Activated CD8-positive, alpha-beta memory T cell treated with anti-CD3 and anti-CD28 coated beads, Interleukin-2, amount 10 ng/mL, durations not matched to agents 7 days and 5 days (primary cell): ENCODE measurements at regions of chr12 and their contacts with region 1.

Region 1: DNA sequence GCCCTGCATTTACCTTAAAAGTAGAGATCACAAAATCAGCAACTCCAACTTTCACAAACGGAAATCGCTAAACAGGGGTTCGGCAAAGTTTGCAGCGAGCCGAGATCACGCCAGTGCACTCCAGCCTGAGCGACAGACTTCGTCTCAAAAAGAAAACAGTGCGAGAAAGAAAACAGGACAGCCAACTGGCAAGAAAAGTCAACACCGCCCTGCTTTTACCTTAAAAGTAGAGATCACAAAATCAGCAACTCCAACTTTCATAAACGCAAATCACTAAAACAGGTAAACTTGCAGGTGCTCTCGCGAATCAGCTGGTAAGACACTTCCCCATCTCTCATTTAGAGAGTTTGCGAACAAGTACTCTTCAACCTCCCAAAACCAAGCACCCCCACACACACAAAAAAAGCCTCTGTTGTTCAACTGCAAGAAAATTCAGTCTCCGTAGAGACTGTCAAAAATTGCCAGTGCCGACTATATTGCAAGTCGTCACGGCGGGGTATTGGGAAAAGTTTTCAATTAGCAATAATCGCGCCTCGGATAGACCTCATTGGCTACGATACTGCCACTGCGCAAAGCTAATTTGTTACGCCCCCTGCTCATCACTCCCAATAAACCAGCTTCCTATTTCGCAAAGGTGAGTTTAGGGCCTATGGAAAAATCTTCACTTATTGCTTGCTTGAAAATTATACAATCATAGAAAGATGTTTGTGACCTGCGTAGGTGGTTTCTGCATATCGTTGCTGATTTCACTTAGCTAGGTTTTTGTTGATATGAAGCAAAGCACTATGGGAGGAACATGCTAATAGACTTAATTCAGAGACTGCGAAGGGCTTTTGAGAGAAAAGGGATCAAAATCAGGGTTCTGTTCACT is at the start of gene RNU4-1:
- DNase-seq: peak; percentile 90
- ATAC-seq: peak; percentile 45
- H3K4me3 Mint-ChIP-seq: no peak within 1 kb of the TSS
- H3K27ac Mint-ChIP-seq: no peak within 1 kb of the TSS
- H3K4me1 Mint-ChIP-seq: peaks cover 10% of the 10 kb centered on the region
- H3K27me3 Mint-ChIP-seq: peaks cover 2% of the 10 kb centered on the region
- total RNA-seq, gene RNU4-1: 780 to 2,122 TPM

Region 2: GRCh38 chr12:120200364-120200800 is 92.5 kb before region 1 on chr12:
- CTCF ChIA-PET with region 1: interaction called, 28 read pairs
- DNase-seq: no peak
- ATAC-seq: no peak
- H3K4me3 Mint-ChIP-seq: peak overlapping the region; percentile 89
- H3K27ac Mint-ChIP-seq: peak overlapping the region; percentile 99
- H3K4me1 Mint-ChIP-seq: peaks cover 48% of the 10 kb centered on the region
- H3K27me3 Mint-ChIP-seq: no peaks in the 10 kb centered on the region

Region 3: GRCh38 chr12:120352117-120352516 is 59.2 kb after region 1 on chr12:
- CTCF ChIA-PET with region 1: no interaction called
- DNase-seq: no peak
- ATAC-seq: no peak
- H3K4me3 Mint-ChIP-seq: no peak overlapping the region
- H3K27ac Mint-ChIP-seq: no peak overlapping the region
- H3K4me1 Mint-ChIP-seq: no peaks in the 10 kb centered on the region
- H3K27me3 Mint-ChIP-seq: peaks cover 2% of the 10 kb centered on the region